Mammary epithelial cell (primary cell): ENCODE measurements at regions of chr22 and their contacts with region 1.

Region 1: GRCh38 chr22:22357024-22357883 is 112.7 kb downstream of the VPREB1 start:
- DNase-seq: peak; percentile 55
- H3K4me3 ChIP-seq: no peak overlapping the region
- H3K27ac ChIP-seq: no peak overlapping the region
- H3K4me1 ChIP-seq: no peaks in the 10 kb centered on the region
- H3K27me3 ChIP-seq: no peaks in the 10 kb centered on the region
- CTCF ChIP-seq: peak; percentile 66 to 84

Region 2: DNA sequence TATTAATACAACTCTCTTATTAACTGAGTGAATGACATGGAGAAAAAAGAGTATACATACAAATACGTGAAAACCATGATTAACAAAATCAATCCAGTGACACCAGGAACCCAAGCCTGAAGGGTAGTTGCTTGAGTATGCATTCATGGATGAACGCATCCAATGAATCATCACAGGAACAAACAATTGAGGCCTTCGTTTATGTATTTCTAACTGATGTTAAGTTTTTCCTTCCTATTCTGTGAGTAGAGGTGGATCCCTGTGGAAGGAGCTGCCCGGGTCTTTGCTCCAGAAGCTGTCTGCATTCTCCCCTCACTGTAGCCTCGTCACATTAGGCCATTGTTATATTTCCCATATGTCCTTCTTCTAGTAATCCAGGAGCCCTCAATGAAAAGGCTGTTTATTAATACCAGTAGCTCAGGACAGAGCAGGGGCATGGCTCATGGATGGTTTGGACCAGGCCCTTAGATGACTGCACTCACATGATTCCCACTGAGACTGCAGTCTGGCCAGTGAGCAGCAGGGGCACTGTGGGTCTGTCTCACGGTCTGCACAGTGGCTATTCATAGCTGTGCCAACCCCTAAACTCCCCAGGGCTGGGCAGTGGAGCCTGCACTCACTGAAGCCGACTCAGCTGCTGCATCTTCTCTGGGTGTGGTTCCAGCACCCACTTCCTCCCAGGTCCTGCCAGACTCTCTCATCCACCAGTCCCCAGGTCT is 246.5 kb before region 1 on chr22:
- CTCF ChIA-PET with region 1: no interaction called
- dilution Hi-C with region 1: no loop called
- in situ Hi-C with region 1: no loop called
- intact Hi-C with region 1: no loop called
- DNase-seq: peak; percentile 93
- H3K4me3 ChIP-seq: no peak overlapping the region
- H3K27ac ChIP-seq: peak overlapping the region; percentile 82
- H3K4me1 ChIP-seq: peaks cover 18% of the 10 kb centered on the region
- H3K27me3 ChIP-seq: no peaks in the 10 kb centered on the region
- CTCF ChIP-seq: peak; percentile 79 to 87

Region 3: DNA sequence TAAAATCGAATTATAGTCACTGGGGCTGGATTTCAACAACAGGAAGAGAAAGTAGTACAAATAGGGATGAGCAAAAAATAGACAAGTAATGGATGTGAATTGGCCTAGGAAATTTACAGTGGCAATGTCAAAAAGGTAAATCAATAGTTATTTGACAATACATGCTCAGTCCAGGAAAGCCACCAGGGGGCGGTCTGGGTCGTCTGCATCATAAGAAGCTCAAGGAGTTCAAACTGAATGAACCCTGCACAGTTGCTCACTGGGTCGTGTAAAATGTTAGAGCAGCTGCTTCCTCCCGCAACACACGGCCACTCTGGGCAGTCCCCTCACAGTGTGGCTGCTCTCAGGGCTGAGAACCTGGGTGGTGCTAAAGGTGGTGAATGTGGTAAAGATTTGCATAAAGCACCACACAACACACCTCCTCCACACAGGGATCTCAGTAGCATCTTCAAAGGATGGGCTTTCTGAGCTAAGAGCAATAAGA is 65.4 kb after region 1 on chr22:
- CTCF ChIA-PET with region 1: no interaction called
- dilution Hi-C with region 1: no loop called
- in situ Hi-C with region 1: no loop called
- intact Hi-C with region 1: loop called (anchors 5 kb)
- DNase-seq: peak; percentile 18
- H3K4me3 ChIP-seq: no peak overlapping the region
- H3K27ac ChIP-seq: no peak overlapping the region
- H3K4me1 ChIP-seq: no peaks in the 10 kb centered on the region
- H3K27me3 ChIP-seq: no peaks in the 10 kb centered on the region
- CTCF ChIP-seq: peak; percentile 81 to 84

Region 4: DNA sequence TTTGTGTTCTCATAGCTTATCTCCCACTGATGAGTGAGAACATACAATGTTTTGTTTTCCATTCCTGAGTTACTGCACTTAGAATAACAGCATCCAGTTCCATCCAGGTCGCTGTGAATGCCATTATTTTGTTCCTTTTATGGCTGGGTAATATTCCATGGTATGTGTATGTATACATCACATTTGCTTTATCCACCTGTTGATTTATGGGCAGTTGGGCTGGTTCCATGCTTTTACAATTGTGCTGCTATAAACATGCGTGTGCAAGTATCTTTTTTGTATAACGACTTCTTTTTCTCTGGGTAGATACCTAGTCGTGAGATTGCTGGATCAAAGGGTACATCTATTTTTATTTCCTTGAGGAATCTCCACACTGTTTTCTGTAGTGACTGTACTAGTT is 76.5 kb after region 1 on chr22:
- CTCF ChIA-PET with region 1: no interaction called
- dilution Hi-C with region 1: no loop called
- in situ Hi-C with region 1: no loop called
- intact Hi-C with region 1: no loop called
- DNase-seq: no peak
- H3K4me3 ChIP-seq: no peak overlapping the region
- H3K27ac ChIP-seq: no peak overlapping the region
- H3K4me1 ChIP-seq: no peaks in the 10 kb centered on the region
- H3K27me3 ChIP-seq: no peaks in the 10 kb centered on the region
- CTCF ChIP-seq: no peak

Region 5: DNA sequence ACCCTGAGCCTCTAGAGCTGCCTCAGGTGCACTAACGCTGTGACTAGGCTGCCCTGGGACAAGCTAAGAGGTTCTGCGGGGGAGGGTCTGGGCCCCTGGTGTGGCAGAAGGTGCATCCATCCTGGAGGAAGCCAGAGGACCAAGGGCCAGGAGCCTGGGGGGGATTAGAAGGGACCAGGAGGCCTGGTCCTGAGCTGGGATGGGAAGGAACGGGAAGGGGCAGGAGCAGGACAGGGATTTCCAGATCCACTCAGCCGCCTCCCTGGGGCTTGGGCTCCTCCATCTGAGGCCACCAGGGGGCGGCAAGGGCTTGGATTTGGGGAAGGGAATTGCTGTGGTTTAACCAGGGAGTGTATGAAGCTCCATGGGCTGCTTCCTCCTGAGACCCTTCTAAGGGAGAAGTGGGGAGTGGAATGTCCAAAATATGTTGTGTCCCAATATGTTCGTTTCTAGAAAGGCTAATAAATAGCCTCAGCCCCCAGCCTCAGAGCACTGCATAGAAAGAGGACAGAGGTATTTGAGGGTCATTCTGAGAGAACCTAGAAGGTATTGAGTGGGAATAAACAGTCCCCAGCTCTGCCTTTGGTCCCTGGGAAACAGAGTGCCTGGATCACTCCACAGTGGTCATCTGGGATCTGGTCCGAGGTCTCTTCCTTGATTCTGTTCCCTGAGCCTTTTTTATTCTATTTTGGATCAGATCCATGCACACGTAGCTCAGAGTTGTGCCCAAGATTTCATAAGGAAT is 219.2 kb after region 1 on chr22:
- CTCF ChIA-PET with region 1: no interaction called
- dilution Hi-C with region 1: no loop called
- in situ Hi-C with region 1: no loop called
- intact Hi-C with region 1: loop called (anchors 2 kb)
- DNase-seq: peak; percentile 11
- H3K4me3 ChIP-seq: no peak overlapping the region
- H3K27ac ChIP-seq: no peak overlapping the region
- H3K4me1 ChIP-seq: no peaks in the 10 kb centered on the region
- H3K27me3 ChIP-seq: no peaks in the 10 kb centered on the region
- CTCF ChIP-seq: peak; percentile 49 to 78

Region 6: GRCh38 chr22:22753526-22754267 is 396.4 kb after region 1 on chr22:
- CTCF ChIA-PET with region 1: no interaction called
- dilution Hi-C with region 1: no loop called
- in situ Hi-C with region 1: no loop called
- intact Hi-C with region 1: loop called (anchors 5 kb)
- DNase-seq: peak; percentile 5
- H3K4me3 ChIP-seq: no peak overlapping the region
- H3K27ac ChIP-seq: no peak overlapping the region
- H3K4me1 ChIP-seq: no peaks in the 10 kb centered on the region
- H3K27me3 ChIP-seq: no peaks in the 10 kb centered on the region
- CTCF ChIP-seq: peak; percentile 72 to 79